Naive thymus-derived CD4-positive, alpha-beta T cell (primary cell): ENCODE measurements at regions of chr2 and their contacts with region 1.

Region 1: GRCh38 chr2:171056307-171056706 is 104.4 kb downstream of the TLK1 start:
- DNase-seq: no peak
- ATAC-seq: no peak
- H3K4me3 ChIP-seq: no peak overlapping the region
- H3K4me3 Mint-ChIP-seq: no peak overlapping the region
- H3K27ac ChIP-seq: no peak overlapping the region
- H3K27ac Mint-ChIP-seq: peak overlapping the region in 2 of 9 donors; percentile 1 to 24
- H3K4me1 ChIP-seq: no peaks in the 10 kb centered on the region
- H3K4me1 Mint-ChIP-seq: peaks cover 0 to 25% (median 6%) of the 10 kb centered on the region in 7 donors
- H3K27me3 ChIP-seq: no peaks in the 10 kb centered on the region
- H3K27me3 Mint-ChIP-seq: no peaks in the 10 kb centered on the region

Region 2: DNA sequence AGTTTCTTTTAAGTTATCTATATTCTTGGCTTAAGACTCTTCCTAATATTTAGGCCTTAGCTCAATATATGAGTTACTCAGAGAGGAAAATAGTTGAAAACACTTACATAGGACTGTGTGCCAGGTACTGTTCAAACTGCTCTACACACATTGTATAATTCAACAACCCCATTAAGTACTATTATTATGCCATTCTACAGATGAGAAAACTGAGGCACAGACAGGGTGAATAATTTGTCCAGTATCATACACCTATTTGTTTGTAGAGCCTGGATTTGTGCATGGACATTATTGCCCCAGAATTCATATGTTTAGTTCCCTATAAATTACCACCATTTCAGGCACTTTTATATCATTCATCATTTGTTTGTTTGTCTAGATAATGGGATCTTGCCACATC is 257.3 kb before region 1 on chr2:
- CTCF ChIA-PET with region 1: no interaction called
- POLR2A ChIA-PET with region 1: no interaction called
- intact Hi-C with region 1: no loop called
- DNase-seq: no peak
- ATAC-seq: no peak
- H3K4me3 ChIP-seq: no peak overlapping the region
- H3K4me3 Mint-ChIP-seq: no peak overlapping the region
- H3K27ac ChIP-seq: no peak overlapping the region
- H3K27ac Mint-ChIP-seq: no peak overlapping the region
- H3K4me1 ChIP-seq: no peaks in the 10 kb centered on the region
- H3K4me1 Mint-ChIP-seq: no peaks in the 10 kb centered on the region
- H3K27me3 ChIP-seq: peaks cover 0 to 3% of the 10 kb centered on the region in 2 donors
- H3K27me3 Mint-ChIP-seq: peaks cover 6 to 28% (median 24%) of the 10 kb centered on the region in 5 donors

Region 3: GRCh38 chr2:170905864-170906263 is 150.4 kb before region 1 on chr2:
- CTCF ChIA-PET with region 1: no interaction called
- POLR2A ChIA-PET with region 1: no interaction called
- intact Hi-C with region 1: no loop called
- DNase-seq: no peak
- ATAC-seq: no peak
- H3K4me3 ChIP-seq: no peak overlapping the region
- H3K4me3 Mint-ChIP-seq: no peak overlapping the region
- H3K27ac ChIP-seq: no peak overlapping the region
- H3K27ac Mint-ChIP-seq: no peak overlapping the region
- H3K4me1 ChIP-seq: no peaks in the 10 kb centered on the region
- H3K4me1 Mint-ChIP-seq: no peaks in the 10 kb centered on the region
- H3K27me3 ChIP-seq: no peaks in the 10 kb centered on the region
- H3K27me3 Mint-ChIP-seq: peaks cover 3 to 19% (median 12%) of the 10 kb centered on the region in 5 donors

Region 4: DNA sequence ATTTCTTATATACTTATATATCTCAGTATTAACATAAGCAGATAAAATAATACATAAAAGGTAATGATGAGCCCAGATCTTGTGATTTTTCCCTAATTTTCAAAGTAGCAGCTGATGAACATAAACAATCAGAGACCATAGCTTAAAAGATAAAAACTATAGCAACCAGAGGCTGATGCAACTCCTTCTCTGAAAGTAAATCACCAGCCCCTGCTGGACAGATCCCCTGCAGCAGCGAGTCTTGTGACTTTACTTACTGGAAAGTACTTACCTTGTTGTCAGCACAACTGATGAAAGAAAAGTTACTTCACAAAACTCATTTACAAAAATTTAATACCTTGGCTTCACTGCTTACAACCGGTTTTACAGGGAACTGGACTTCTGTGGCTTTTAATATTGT is 60.0 kb before region 1 on chr2:
- CTCF ChIA-PET with region 1: no interaction called
- POLR2A ChIA-PET with region 1: no interaction called
- intact Hi-C with region 1: no loop called
- DNase-seq: no peak
- ATAC-seq: no peak
- H3K4me3 ChIP-seq: no peak overlapping the region
- H3K4me3 Mint-ChIP-seq: no peak overlapping the region
- H3K27ac ChIP-seq: no peak overlapping the region
- H3K27ac Mint-ChIP-seq: peak overlapping the region in 1 of 9 donors; percentile 10
- H3K4me1 ChIP-seq: no peaks in the 10 kb centered on the region
- H3K4me1 Mint-ChIP-seq: peaks cover 0 to 12% (median 4%) of the 10 kb centered on the region in 7 donors
- H3K27me3 ChIP-seq: no peaks in the 10 kb centered on the region
- H3K27me3 Mint-ChIP-seq: no peaks in the 10 kb centered on the region

Region 5: GRCh38 chr2:171042253-171042969 is 13.9 kb before region 1 on chr2:
- CTCF ChIA-PET with region 1: interaction called, 3 read pairs
- POLR2A ChIA-PET with region 1: interaction called, 4 read pairs
- intact Hi-C with region 1: loop called in 1 of 2 experiments (anchors 2 kb)
- DNase-seq: peak in 6 of 9 donors; percentile 30 to 55 (median 44)
- ATAC-seq: peak; percentile 42
- H3K4me3 ChIP-seq: no peak overlapping the region
- H3K4me3 Mint-ChIP-seq: peak overlapping the region in 9 of 10 donors; percentile 26 to 86 (median 59)
- H3K27ac ChIP-seq: peak overlapping the region; percentile 43
- H3K27ac Mint-ChIP-seq: peak overlapping the region; percentile 85 to 97 (median 95)
- H3K4me1 ChIP-seq: peaks cover 6 to 30% of the 10 kb centered on the region in 2 donors
- H3K4me1 Mint-ChIP-seq: peaks cover 23 to 51% (median 40%) of the 10 kb centered on the region in 7 donors
- H3K27me3 ChIP-seq: no peaks in the 10 kb centered on the region
- H3K27me3 Mint-ChIP-seq: no peaks in the 10 kb centered on the region

Region 6: GRCh38 chr2:171069286-171069956 is 13.1 kb after region 1 on chr2:
- CTCF ChIA-PET with region 1: no interaction called
- POLR2A ChIA-PET with region 1: interaction called, 3 read pairs
- intact Hi-C with region 1: loop called in 1 of 2 experiments (anchors 1 kb)
- DNase-seq: no peak
- ATAC-seq: no peak
- H3K4me3 ChIP-seq: no peak overlapping the region
- H3K4me3 Mint-ChIP-seq: no peak overlapping the region
- H3K27ac ChIP-seq: no peak overlapping the region
- H3K27ac Mint-ChIP-seq: peak overlapping the region in 2 of 9 donors; percentile 25 to 62
- H3K4me1 ChIP-seq: no peaks in the 10 kb centered on the region
- H3K4me1 Mint-ChIP-seq: peaks cover 3 to 29% (median 27%) of the 10 kb centered on the region in 7 donors
- H3K27me3 ChIP-seq: no peaks in the 10 kb centered on the region
- H3K27me3 Mint-ChIP-seq: no peaks in the 10 kb centered on the region